SK-N-SH (cell line): ENCODE measurements at regions of chr3 and their contacts with region 1.

Region 1: GRCh38 chr3:194333212-194333980 is 17.7 kb downstream of the CPN2 start:
- DNase-seq: peak; percentile 90
- H3K4me3 ChIP-seq: peak overlapping the region; percentile 53 to 59
- H3K27ac ChIP-seq: no peak overlapping the region
- H3K4me1 ChIP-seq: peaks cover 5 to 35% of the 10 kb centered on the region in 2 experiments; a peak in 2 of 4 replicates
- H3K27me3 ChIP-seq: no peaks in the 10 kb centered on the region
- CTCF ChIP-seq: peak; percentile 95
- EP300 ChIP-seq: no peak
- RAD21 ChIP-seq: peak; percentile 98

Region 2: GRCh38 chr3:194306109-194306686 is 27.2 kb before region 1 on chr3:
- CTCF ChIA-PET with region 1: no interaction called
- POLR2A ChIA-PET with region 1: no interaction called
- DNase-seq: no peak
- H3K4me3 ChIP-seq: no peak overlapping the region
- H3K27ac ChIP-seq: no peak overlapping the region
- H3K4me1 ChIP-seq: peaks cover 8 to 25% of the 10 kb centered on the region in 2 experiments; a peak in 3 of 4 replicates
- H3K27me3 ChIP-seq: peaks cover 22% of the 10 kb centered on the region
- CTCF ChIP-seq: no peak
- EP300 ChIP-seq: no peak
- RAD21 ChIP-seq: no peak

Region 3: DNA sequence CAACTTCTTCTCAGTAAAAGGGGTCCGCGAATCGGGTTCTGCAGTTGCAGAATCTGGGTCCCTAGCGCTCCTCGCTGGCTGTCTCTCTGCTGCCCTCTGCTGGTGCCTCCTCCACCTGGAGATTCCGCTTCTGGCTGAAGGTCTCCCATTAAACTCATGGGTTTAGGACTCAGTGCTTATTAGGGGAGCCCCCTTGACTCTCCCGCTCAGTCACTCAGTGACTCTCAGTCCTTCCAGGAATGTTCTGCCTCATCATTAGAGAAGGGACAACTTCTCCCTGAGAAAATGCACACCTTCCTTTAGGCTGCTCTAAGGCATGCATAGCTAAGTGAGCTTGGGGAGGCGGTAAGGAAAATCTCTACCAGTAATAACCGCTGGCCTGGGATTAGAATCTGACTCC is 10.6 kb after region 1 on chr3:
- CTCF ChIA-PET with region 1: interaction called, 62 read pairs
- POLR2A ChIA-PET with region 1: interaction called, 3 read pairs
- DNase-seq: peak; percentile 91
- H3K4me3 ChIP-seq: no peak overlapping the region; a peak in 1 of 4 replicates
- H3K27ac ChIP-seq: no peak overlapping the region
- H3K4me1 ChIP-seq: peaks cover 0 to 9% of the 10 kb centered on the region in 2 experiments; a peak in 1 of 4 replicates
- H3K27me3 ChIP-seq: no peaks in the 10 kb centered on the region
- CTCF ChIP-seq: peak; percentile 97
- EP300 ChIP-seq: no peak
- RAD21 ChIP-seq: peak; percentile 68

Region 4: GRCh38 chr3:194364652-194365434 is 31.4 kb after region 1 on chr3:
- CTCF ChIA-PET with region 1: interaction called, 14 read pairs
- POLR2A ChIA-PET with region 1: no interaction called
- DNase-seq: peak; percentile 72
- H3K4me3 ChIP-seq: no peak overlapping the region
- H3K27ac ChIP-seq: peak overlapping the region; percentile 20 to 74; a peak in 3 of 4 replicates
- H3K4me1 ChIP-seq: peaks cover 15 to 41% of the 10 kb centered on the region in 2 experiments; a peak in 3 of 4 replicates
- H3K27me3 ChIP-seq: no peaks in the 10 kb centered on the region; the same call in 1 of the 2 replicates
- CTCF ChIP-seq: no peak
- EP300 ChIP-seq: peak in 1 of 2 experiments; percentile 78; a peak in 2 of 4 replicates
- RAD21 ChIP-seq: no peak

Region 5: GRCh38 chr3:194404365-194405140 is 71.2 kb after region 1 on chr3:
- CTCF ChIA-PET with region 1: interaction called, 326 read pairs
- POLR2A ChIA-PET with region 1: interaction called, 6 read pairs
- DNase-seq: no peak
- H3K4me3 ChIP-seq: no peak overlapping the region; a peak in 1 of 4 replicates
- H3K27ac ChIP-seq: 0 out of 4 replicates have a peak overlapping the region, but pooled peaks of 1 of the 2 experiments have one; percentile 0
- H3K4me1 ChIP-seq: no peaks in the 10 kb centered on the region
- H3K27me3 ChIP-seq: no peaks in the 10 kb centered on the region
- CTCF ChIP-seq: peak; percentile 86
- EP300 ChIP-seq: no peak
- RAD21 ChIP-seq: peak; percentile 86

Region 6: GRCh38 chr3:194671900-194672808 is 338.8 kb after region 1 on chr3 and contains the start of gene LSG1:
- CTCF ChIA-PET with region 1: interaction called, 12 read pairs
- POLR2A ChIA-PET with region 1: no interaction called
- DNase-seq: peak; percentile 89
- H3K4me3 ChIP-seq: peak within 1 kb of the TSS; percentile 94 to 95
- H3K27ac ChIP-seq: peak within 1 kb of the TSS; percentile 83 to 92
- H3K4me1 ChIP-seq: peaks cover 10 to 12% of the 10 kb centered on the region in 2 experiments; a peak in 3 of 4 replicates
- H3K27me3 ChIP-seq: no peaks in the 10 kb centered on the region
- CTCF ChIP-seq: no peak
- EP300 ChIP-seq: peak; percentile 18 to 57; a peak in 1 of 4 replicates
- RAD21 ChIP-seq: no peak
- polyA plus RNA-seq, gene LSG1: 35.1 and 43.7 TPM in 2 replicates